ENCODE measurements at regions of chr10 and their contacts with region 1.

Region 1: DNA sequence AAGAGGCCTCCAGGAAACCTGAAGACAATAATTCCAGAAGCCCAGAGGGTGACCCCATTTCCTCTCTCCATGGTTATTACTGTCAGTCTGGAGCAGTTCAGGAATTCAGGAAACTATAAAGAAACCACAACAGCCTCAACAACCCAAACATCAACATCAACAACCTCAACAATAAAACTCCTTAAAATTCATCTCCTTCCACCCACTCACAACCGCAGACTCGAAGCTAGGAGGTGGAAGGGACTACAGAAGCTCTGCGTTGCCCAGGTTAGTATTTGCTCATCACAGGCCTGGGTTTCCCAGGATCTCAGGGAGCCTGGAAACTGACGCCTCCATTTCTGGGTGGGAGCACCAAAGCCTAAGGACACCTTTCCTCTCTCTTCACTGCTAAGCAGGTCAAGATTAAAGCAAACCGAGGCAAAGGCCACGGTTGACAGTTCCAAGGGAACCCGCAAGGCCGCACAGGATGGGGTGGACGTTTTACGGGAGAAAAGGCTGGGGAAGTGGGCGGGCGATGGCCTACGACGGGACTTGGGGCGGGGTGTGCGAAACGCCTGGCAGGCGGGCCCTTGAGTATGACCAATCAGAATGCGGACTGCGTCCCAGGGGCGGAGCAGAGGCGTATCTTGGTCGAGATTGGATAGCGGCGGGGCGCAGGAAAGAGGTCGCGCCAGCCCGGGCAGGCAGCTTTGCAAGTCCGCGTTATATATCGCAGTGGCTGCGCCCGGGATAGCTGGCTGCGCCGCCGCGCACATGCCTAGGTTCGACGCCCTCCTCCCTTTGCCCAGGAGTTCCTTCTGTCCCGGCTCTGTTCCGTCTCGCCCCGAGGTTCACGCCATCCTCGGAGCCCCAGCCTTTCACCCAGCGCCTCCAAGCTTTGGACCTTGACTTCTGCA is at the start of gene ELOVL3:
- DNase-seq: peak; percentile 93 to 96
- ATAC-seq: peak; percentile 93 to 98 (median 98)
- H3K4me3 ChIP-seq: peak within 1 kb of the TSS in 7 of 10 donors; percentile 18 to 49 (median 45)
- H3K27ac ChIP-seq: peak within 1 kb of the TSS; percentile 19 to 89 (median 74)
- H3K4me1 ChIP-seq: peaks cover 6 to 44% (median 23%) of the 10 kb centered on the region in 9 donors
- H3K27me3 ChIP-seq: peaks cover 0 to 27% (median 10%) of the 10 kb centered on the region in 7 donors
- CTCF ChIP-seq: peak in 3 of 9 donors; percentile 1 to 10 (median 5)
- total RNA-seq, gene ELOVL3: 0.22 to 0.45 (median 0.30) TPM in 3 of 10 donors, not detected in the others

Region 2: GRCh38 chr10:102167861-102168260 is 58.0 kb before region 1 on chr10:
- intact Hi-C with region 1: loop called in 6 of 10 experiments (anchors 5 to 10 kb)
- DNase-seq: no peak
- ATAC-seq: no peak
- H3K4me3 ChIP-seq: no peak overlapping the region
- H3K27ac ChIP-seq: no peak overlapping the region
- H3K4me1 ChIP-seq: peaks cover 0 to 12% (median 4%) of the 10 kb centered on the region in 9 donors
- H3K27me3 ChIP-seq: no peaks in the 10 kb centered on the region
- CTCF ChIP-seq: no peak

Region 3: DNA sequence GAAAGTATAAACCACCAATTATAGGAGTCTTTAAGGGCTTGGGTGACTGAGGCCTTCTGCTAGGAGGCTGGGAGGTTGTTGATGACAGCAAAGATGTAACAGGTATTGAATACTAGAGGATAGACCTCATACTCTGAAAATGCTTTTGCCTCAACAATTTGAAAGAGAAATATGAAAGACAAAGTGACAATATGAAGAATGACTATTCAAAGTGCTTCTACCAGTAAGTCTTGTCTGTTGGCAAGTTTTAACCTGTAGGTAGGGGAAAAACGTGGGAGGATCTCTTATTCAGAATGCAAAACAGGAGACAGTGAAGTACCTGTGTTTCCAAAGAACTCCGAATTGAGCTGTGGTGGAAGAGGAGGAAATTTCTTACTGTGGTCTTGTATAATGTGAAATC is 57.6 kb after region 1 on chr10:
- intact Hi-C with region 1: no loop called
- DNase-seq: no peak
- ATAC-seq: no peak
- H3K4me3 ChIP-seq: no peak overlapping the region
- H3K27ac ChIP-seq: peak overlapping the region in 5 of 10 donors; percentile 23 to 88 (median 85)
- H3K4me1 ChIP-seq: peaks cover 8 to 97% (median 65%) of the 10 kb centered on the region in 9 donors
- H3K27me3 ChIP-seq: no peaks in the 10 kb centered on the region
- CTCF ChIP-seq: no peak

Region 4: GRCh38 chr10:102476466-102477141 is 250.7 kb after region 1 on chr10:
- intact Hi-C with region 1: loop called in 1 of 10 experiments (anchors 10 kb)
- DNase-seq: no peak
- ATAC-seq: no peak
- H3K4me3 ChIP-seq: no peak overlapping the region
- H3K27ac ChIP-seq: no peak overlapping the region
- H3K4me1 ChIP-seq: peaks cover 4 to 16% (median 11%) of the 10 kb centered on the region in 9 donors
- H3K27me3 ChIP-seq: no peaks in the 10 kb centered on the region
- CTCF ChIP-seq: no peak

Region 5: DNA sequence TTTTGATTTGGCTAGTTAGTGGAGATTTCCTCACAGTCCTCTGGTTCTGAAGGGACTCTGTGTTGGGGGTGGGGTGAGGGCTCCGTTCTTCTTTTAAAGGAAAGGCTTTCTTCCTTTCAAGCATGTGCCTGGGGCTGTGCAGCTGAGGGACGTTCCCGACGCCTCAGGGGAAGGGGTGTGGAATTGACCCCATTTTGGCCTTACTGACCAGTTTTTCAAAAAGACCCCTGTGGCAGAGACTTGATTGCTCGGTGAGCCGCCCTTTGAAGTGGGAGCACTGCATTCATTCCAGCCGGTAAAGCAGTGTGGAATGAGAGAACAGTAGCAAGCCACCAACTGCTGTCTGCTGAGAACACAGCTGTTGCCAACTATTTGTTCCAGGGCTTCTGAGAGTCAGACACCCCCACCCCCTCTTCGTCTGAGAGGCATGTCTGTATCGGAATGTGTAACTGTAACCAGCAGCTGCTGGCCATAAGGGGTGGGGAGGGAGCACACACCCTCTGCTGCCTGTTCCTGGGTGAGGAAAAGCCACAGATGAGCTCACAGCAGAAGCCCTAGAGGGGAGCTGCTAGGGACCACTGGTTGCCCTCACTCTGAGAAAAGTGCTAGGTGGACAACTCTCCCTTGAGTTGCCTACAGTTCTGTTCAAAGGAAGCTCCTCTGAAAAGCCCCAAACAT is 551.0 kb after region 1 on chr10:
- intact Hi-C with region 1: no loop called
- DNase-seq: peak; percentile 64 to 92
- ATAC-seq: peak; percentile 68 to 87 (median 81)
- H3K4me3 ChIP-seq: peak overlapping the region; percentile 36 to 67 (median 59)
- H3K27ac ChIP-seq: peak overlapping the region; percentile 85 to 99 (median 97)
- H3K4me1 ChIP-seq: peaks cover 41 to 100% (median 87%) of the 10 kb centered on the region in 9 donors
- H3K27me3 ChIP-seq: no peaks in the 10 kb centered on the region
- CTCF ChIP-seq: no peak